ENCODE measurements at regions of chr18 and their contacts with region 1.

Region 1: GRCh38 chr18:62702253-62702652 is 13.1 kb upstream of the PHLPP1 start:
- DNase-seq: no peak
- H3K4me3 ChIP-seq: no peak overlapping the region
- H3K27ac ChIP-seq: no peak overlapping the region
- H3K4me1 ChIP-seq: no peaks in the 10 kb centered on the region
- H3K27me3 ChIP-seq: no peaks in the 10 kb centered on the region
- CTCF ChIP-seq: no peak
- EP300 ChIP-seq: no peak
- POLR2A ChIP-seq: no peak

Region 2: GRCh38 chr18:62596145-62597005 is 105.9 kb before region 1 on chr18:
- intact Hi-C with region 1: loop called (anchors 10 kb)
- DNase-seq: peak in 1 of 2 donors; percentile 66
- H3K4me3 ChIP-seq: peak overlapping the region; percentile 28 to 44 (median 36)
- H3K27ac ChIP-seq: no peak overlapping the region
- H3K4me1 ChIP-seq: peaks cover 11 to 17% (median 15%) of the 10 kb centered on the region in 4 donors
- H3K27me3 ChIP-seq: peaks cover 6 to 77% (median 31%) of the 10 kb centered on the region in 3 donors
- CTCF ChIP-seq: no peak
- EP300 ChIP-seq: no peak
- POLR2A ChIP-seq: no peak

Region 3: GRCh38 chr18:62814132-62814759 is 112.0 kb after region 1 on chr18:
- intact Hi-C with region 1: loop called (anchors 10 kb)
- DNase-seq: no peak
- H3K4me3 ChIP-seq: no peak overlapping the region
- H3K27ac ChIP-seq: no peak overlapping the region
- H3K4me1 ChIP-seq: peaks cover 0 to 33% (median 6%) of the 10 kb centered on the region in 4 donors
- H3K27me3 ChIP-seq: no peaks in the 10 kb centered on the region
- CTCF ChIP-seq: no peak
- EP300 ChIP-seq: no peak
- POLR2A ChIP-seq: no peak

Measured in stomach (tissue), 19 donors.